ENCODE measurements at regions of chr20 and their contacts with region 1.

Region 1: DNA sequence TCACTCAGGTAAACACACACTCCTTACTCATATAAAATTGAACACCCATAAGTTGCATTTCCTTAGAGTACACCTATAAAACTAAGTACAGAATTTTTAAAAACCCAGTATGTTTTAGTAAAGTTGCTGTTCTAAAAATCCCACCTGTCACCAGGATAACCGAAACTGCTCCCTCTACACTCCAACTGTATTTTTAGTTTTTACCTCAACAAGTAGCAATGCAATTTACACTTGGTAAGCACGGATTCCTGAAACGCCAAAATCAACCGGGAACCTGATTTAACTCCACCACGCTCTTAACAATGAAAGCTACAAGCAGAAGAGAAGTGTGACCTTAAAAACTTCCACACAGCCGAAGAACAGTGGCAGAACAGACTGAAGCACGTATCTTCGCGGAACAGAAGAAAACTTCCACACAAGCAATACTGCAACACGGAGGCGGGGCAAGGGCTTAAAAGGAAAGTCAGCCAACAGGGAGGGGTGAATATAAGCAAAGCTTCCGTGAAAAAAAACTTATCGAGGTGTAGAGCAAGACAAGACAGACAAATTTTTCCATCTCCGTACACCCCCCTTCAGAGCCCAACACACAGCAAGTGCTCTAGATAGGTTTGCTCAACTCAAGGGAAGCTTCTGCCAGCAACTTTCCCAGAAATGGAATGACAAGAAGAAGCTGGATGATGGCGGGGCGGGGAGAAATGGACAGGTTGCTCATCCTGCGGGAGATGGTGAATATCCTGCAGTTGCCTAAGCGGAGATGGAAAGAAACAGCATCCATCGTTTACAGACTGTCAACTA is 1.4 kb downstream of the STAU1 start:
- DNase-seq: peak in 4 of 10 donors; percentile 21 to 76 (median 28)

Region 2: DNA sequence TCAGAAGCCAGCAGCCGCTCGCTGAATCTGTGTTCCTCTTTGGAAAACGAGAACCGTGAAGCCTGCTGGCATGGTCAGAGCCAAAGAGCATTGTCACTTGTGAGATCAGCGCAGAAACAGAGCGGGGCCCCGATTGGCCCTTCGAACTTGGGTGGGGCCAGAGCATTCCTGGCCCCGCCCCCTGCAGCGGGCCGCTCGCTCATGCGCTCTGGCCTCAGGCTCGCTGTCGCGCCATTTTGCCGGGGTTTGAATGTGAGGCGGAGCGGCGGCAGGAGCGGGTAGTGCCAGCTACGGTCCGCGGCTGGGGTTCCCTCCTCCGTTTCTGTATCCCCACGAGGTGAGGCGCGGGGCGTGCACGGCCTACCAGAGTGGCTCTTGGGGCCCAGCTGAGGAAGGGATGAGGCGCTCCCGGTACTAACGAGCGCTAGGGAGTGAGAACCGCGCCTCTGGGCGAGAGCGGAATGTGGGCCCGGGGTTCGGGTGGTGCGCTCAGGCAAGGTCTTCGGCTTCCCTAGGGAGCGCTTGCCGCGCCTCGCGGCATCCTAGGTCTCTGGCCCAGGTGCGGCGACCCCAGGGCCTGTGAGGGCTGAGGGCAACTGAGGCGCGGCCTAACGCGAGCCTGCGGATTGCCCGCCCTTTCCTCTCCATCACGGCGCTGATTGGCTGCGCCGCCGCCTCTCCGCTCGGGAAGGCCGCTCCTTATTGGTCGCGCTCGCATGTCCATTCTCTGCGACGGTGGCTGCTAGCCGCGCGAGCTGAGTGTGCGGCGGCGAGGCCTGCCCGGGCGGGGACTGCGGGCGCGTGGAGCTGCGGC is 140.4 kb before region 1 on chr20 and contains the start of gene CSE1L:
- intact Hi-C with region 1: loop called (anchors 2 kb)
- DNase-seq: peak; percentile 93 to 99 (median 97)

Region 3: GRCh38 chr20:49132995-49133478 is 53.7 kb before region 1 on chr20:
- intact Hi-C with region 1: loop called (anchors 5 kb)
- DNase-seq: no peak

Region 4: GRCh38 chr20:49166534-49167449 is 19.9 kb before region 1 on chr20:
- intact Hi-C with region 1: no loop called
- DNase-seq: no peak

Region 5: GRCh38 chr20:49219089-49219923 is 32.6 kb after region 1 on chr20 and contains the start of gene DDX27:
- intact Hi-C with region 1: loop called (anchors 1 kb)
- DNase-seq: peak; percentile 94 to 99 (median 98)

Region 6: GRCh38 chr20:49278036-49278817 is 91.5 kb after region 1 on chr20 and contains the start of gene ZNFX1:
- intact Hi-C with region 1: loop called (anchors 1 kb)
- DNase-seq: peak; percentile 96 to 100 (median 98)

Region 7: GRCh38 chr20:50003253-50003656 is 816.5 kb after region 1 on chr20:
- intact Hi-C with region 1: no loop called
- DNase-seq: no peak

Measured in posterior cingulate gyrus (tissue), 11 donors.